ENCODE measurements at regions of chr11 and their contacts with region 1.

Region 1: GRCh38 chr11:95231127-95231880 is at the start of gene SESN3:
- DNase-seq: peak; percentile 90 to 100 (median 98)
- H3K4me3 ChIP-seq: peak within 1 kb of the TSS; percentile 65 to 96 (median 87)
- H3K27ac ChIP-seq: peak within 1 kb of the TSS; percentile 59 to 99 (median 95)
- H3K27me3 ChIP-seq: no peaks in the 10 kb centered on the region
- CTCF ChIP-seq: peak in 32 of 56 donors; percentile 2 to 47 (median 22)
- total RNA-seq, gene SESN3: 59.6 to 186 (median 116) TPM

Region 2: DNA sequence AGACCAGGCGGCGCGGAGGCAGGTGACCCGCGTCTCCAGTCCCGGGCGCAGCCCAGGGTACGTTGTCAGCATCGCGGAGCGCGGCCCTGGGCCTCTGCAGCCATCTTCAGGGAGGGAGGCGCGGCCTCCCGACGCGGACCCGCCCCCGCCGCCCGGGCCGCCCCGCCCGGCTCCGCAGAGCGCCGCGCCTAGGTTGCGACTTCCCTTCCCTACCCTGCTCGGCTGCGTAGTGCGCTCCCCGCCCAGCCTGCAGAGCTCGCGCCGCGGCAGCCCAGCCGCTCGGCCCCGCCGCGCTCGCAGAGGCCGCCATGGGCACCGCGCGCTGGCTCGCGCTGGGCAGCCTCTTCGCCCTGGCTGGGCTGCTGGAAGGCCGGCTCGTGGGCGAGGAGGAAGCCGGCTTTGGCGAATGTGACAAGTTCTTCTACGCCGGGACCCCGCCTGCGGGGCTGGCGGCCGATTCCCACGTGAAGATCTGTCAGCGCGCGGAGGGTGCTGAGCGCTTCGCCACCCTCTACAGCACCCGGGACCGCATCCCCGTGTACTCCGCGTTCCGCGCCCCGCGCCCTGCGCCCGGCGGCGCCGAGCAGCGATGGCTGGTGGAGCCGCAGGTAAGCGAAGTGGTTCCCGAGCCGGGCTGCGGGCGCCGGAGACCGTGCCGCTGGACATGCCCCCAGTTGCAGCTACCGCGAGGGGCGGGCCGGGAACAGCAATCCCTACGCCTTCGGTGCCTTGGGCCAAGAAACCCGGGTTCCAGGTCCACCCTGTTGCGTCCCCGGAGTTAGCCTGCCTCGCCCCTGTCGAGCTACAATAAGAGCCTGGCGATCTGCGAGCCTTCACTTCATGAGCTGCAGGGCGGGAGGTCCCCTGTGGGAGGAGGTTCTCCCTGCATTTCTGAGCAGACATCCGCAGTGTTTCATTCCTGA is 141.4 kb before region 1 on chr11 and contains the start of gene ENDOD1:
- intact Hi-C with region 1: loop called in 1 of 2 experiments (anchors 10 kb)
- DNase-seq: peak; percentile 47 to 90 (median 79)
- H3K4me3 ChIP-seq: peak within 1 kb of the TSS; percentile 61 to 99 (median 91)
- H3K27ac ChIP-seq: peak within 1 kb of the TSS; percentile 92 to 100 (median 98)
- H3K27me3 ChIP-seq: no peaks in the 10 kb centered on the region
- CTCF ChIP-seq: peak in 36 of 56 donors; percentile 7 to 56 (median 26)
- total RNA-seq, gene ENDOD1: 49.1 to 144 (median 71.1) TPM

Region 3: DNA sequence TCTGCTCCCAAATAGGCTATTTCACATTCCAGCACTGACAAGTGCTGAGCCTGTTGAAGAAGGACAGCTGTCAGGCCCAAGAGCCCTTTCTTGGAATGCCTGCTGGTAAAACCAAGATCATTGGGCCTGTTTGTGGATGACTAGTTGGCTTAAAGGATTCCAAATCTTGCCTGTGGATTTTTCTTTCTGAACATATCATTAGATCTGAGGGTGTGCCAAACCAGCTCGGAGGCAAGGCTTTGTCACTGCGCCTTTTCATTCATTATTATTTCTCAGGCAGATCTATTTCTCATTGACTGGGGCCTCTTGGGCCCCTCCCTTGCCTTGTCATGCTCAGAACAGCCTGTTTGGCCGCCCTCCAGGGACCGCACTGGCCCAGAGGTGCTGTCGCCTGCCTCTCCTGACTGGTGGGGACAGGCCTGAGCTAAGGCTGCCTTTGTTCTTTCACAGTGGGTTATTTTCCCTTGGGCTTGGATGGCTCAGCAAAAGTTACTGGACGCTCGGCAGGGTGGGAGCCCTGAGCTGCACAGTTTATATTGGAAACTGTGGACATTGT is 222.4 kb after region 1 on chr11:
- intact Hi-C with region 1: loop called in 1 of 2 experiments (anchors 10 kb)
- DNase-seq: peak in 9 of 10 donors; percentile 54 to 84 (median 71)
- H3K4me3 ChIP-seq: peak overlapping the region in 11 of 59 donors; percentile 0 to 47 (median 12)
- H3K27ac ChIP-seq: peak overlapping the region in 35 of 59 donors; percentile 1 to 77 (median 44)
- H3K27me3 ChIP-seq: no peaks in the 10 kb centered on the region
- CTCF ChIP-seq: peak in 4 of 56 donors; percentile 7 to 27 (median 18)

Region 4: DNA sequence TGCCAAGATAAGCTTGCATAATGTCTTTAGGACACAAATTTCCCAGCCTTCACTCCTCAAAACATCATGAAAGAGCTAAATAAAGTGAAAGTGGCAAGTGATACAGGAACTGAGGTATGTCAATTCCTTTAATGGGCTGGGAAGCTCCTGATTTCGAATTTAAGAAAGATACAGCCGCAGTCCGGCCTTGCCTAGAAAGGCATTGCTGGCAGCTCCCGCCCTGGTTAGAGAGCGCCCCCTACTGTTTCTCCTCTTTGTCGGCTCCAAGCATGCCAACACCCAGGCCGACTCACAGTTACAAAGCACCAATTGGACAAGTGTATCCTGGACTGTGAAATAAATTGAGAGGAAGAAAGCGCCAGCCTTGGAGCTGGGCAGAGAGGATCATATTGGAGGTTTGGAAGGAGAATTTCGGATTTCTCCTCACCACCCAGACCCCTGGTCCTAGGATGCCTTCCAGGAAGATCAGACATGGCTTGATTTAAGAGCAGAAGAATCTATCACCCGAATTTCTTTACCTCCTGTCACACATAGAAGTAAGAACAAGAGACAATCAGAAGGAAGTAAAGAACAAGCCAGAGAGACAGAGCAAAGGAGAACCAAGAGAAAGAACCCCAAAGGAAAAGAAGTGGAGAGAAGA is 474.3 kb after region 1 on chr11:
- intact Hi-C with region 1: loop called in 1 of 2 experiments (anchors 5 kb)
- DNase-seq: peak; percentile 68 to 91 (median 86)
- H3K4me3 ChIP-seq: peak overlapping the region in 5 of 59 donors; percentile 6 to 32 (median 15)
- H3K27ac ChIP-seq: peak overlapping the region in 55 of 59 donors; percentile 2 to 93 (median 57)
- H3K27me3 ChIP-seq: no peaks in the 10 kb centered on the region
- CTCF ChIP-seq: peak; percentile 77 to 97 (median 94)